Psoas muscle (tissue), 8 donors: ENCODE measurements at regions of chr1 and their contacts with region 1.

Region 1: DNA sequence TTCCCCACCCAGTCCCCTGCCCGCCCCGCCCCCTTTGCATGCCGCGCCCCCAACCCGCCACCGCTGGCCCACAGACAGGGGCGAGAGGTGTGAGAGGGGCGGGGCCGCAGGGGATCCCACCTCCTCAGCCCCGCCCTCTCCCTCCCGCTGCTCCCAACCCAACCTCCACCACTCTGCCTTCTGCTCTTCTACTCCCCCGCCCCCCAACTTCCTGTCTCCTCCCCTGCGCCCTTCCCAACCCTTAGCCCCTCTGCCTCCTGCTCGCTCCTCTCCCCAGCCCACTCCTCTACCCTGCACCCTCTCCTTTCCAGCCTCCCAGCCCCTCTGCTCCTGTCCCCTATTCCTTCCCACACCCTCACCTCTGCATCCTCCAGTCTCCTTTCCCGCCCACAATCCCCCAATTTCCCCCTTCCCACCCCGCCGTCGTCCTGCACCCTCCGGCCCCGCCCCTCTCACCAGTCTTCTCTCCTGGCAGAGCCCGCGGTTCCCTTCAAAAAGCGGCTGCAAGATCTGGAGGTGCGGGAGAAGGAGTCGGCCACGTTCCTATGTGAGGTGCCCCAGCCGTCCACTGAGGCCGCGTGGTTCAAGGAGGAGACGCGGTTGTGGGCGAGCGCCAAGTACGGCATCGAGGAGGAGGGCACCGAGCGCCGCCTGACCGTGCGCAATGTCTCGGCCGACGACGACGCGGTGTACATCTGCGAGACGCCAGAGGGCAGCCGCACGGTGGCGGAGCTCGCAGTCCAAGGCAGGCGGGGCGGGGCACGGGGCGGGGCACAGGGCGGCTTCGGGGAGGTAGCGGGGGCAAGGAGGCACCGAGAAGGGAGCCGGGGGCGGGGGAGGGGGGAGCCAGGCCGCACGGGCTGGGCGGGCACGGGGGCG is 5.4 kb downstream of the OBSCN start:
- DNase-seq: peak; percentile 86 to 93
- ATAC-seq: peak; percentile 20 to 41 (median 30)
- H3K4me3 ChIP-seq: peak overlapping the region; percentile 91
- H3K27ac ChIP-seq: peak overlapping the region; percentile 99
- H3K4me1 ChIP-seq: peaks cover 62% of the 10 kb centered on the region
- H3K27me3 ChIP-seq: no peaks in the 10 kb centered on the region
- CTCF ChIP-seq: peak; percentile 40

Region 2: DNA sequence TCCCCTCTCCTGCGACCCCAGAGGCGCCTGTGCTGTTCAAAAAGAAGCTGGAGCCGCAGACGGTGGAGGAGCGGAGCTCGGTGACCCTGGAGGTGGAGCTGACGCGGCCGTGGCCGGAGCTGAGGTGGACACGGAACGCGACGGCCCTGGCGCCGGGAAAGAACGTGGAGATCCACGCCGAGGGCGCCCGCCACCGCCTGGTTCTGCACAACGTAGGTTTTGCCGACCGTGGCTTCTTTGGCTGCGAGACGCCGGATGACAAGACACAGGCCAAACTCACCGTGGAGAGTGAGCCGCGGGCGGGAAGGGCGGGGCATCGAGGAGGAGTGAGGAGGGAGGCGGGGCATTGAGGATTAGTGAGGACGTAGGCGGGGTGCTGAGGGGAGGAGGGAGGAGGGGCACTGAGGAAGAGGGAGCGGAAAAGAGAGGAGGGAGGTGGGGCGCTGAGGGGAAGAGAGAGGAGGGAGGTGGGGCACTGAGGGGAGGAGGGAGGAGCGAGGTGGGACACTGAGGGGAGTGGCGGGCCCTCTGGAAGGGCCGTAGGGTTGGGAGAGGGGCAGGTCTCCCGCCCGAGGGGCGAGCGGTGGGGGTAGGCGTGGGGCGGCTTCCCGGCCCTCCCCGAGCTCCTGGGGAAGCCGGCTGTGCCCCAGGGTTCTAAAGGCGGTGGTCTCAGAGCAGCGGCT is 62.7 kb after region 1 on chr1:
- intact Hi-C with region 1: loop called in 1 of 2 experiments (anchors 5 kb)
- DNase-seq: peak; percentile 86 to 91
- ATAC-seq: peak; percentile 33 to 55 (median 37)
- H3K4me3 ChIP-seq: peak overlapping the region; percentile 60
- H3K27ac ChIP-seq: peak overlapping the region; percentile 56
- H3K4me1 ChIP-seq: peaks cover 38% of the 10 kb centered on the region
- H3K27me3 ChIP-seq: no peaks in the 10 kb centered on the region
- CTCF ChIP-seq: no peak

Region 3: DNA sequence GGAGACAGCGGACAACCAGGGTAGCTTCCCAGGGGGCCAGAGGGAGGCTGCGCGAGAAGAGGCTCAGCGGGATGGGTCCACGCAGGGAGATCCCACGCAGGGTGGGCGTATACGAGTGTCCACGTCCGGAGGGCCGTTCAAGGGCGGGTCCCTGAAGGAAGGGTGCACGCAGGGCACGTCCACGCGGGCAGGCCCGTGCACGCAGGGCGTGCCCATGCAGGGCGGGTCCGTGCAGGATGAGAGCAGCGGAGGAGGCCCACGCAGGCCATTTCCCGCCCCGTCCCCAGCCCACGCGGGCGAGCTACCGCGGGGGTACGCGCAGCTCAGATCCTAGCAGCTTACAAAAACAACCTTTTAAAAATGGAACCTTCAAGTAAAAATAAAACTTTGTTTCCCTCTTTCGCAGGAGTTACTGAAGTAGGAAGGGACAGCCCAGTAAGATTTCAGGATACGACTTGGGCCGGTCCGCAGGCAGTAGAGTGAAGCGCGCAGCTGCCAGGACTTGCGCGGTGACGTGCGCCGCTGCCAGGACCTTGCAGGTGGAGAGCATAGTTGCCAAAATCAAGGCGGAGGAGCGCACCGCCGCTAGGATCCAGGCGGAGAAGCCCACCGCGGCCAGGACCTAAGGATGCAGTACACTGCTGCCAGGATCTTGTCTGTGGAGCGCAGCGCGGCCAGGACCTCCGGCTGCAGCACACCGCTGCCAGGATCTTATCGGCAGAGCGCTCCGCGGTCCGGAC is 273.6 kb after region 1 on chr1:
- intact Hi-C with region 1: loop called in 1 of 2 experiments (anchors 10 kb)
- DNase-seq: peak; percentile 81 to 87
- ATAC-seq: peak; percentile 73 to 84 (median 78)
- H3K4me3 ChIP-seq: peak overlapping the region; percentile 98
- H3K27ac ChIP-seq: peak overlapping the region; percentile 100
- H3K4me1 ChIP-seq: peaks cover 31% of the 10 kb centered on the region
- H3K27me3 ChIP-seq: no peaks in the 10 kb centered on the region
- CTCF ChIP-seq: no peak